H1 (cell line): ENCODE measurements at regions of chr17 and their contacts with region 1.

Region 1: GRCh38 chr17:64129764-64130558 is at the start of gene ERN1:
- DNase-seq: peak; percentile 81 to 91
- H3K4me3 ChIP-seq: peak within 1 kb of the TSS; percentile 69 to 79 (median 74)
- H3K27ac ChIP-seq: no peak within 1 kb of the TSS
- H3K4me1 ChIP-seq: no peaks in the 10 kb centered on the region
- H3K27me3 ChIP-seq: peaks cover 0 to 21% (median 11%) of the 10 kb centered on the region in 4 experiments; a peak in 6 of 7 replicates
- CTCF ChIP-seq: 0 out of 4 replicates have a peak, but pooled peaks of 1 of the 3 experiments have one; percentile 11
- EP300 ChIP-seq: no peak
- POLR2A ChIP-seq: peak; percentile 75 to 76
- RAD21 ChIP-seq: peak in 1 of 2 experiments; percentile 5; a peak in 1 of 4 replicates
- total RNA-seq, gene ERN1: 3.9 and 5.7 TPM in 2 replicates

Region 2: DNA sequence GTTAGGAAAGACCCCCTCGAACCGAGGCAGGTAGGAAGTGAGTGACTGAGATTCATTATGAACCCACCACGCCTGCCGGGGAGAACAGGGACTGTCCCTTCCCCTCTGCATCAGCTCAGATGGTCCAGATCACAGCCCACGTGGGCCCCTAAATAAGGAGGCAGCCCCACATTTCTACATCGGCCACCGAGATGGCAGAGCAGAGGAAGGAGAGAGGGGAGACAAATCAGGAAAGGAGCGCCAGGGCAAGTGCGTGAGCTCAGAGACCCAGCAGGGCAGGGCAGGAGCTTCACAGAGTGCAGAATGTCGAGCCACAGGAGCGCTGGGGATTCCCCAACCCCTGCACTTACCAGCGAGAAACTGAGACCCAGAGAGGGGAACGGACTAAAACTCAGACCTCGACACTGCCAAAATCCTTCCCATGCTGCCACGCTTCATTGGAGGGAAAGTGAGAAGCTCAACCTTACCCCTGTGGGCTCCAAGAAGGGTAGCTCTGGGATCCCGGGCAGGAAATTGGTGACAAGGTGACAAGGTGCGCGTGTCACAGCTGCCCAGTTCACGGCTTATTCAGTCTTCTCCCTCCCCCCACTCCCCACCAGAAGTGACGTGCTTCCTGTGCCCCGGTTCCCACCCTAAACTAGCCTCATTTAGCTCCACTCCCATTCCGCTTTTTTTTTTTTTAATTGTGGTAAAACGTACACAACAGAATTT is 109.8 kb before region 1 on chr17 and contains the start of gene ICAM2:
- CTCF ChIA-PET with region 1: interaction called, 202 read pairs
- POLR2A ChIA-PET with region 1: interaction called, 3 read pairs
- DNase-seq: no peak
- H3K4me3 ChIP-seq: peak within 1 kb of the TSS in 3 of 4 experiments; percentile 3 to 17 (median 3); a peak in 2 of 8 replicates
- H3K27ac ChIP-seq: no peak within 1 kb of the TSS
- H3K4me1 ChIP-seq: peaks cover 0 to 5% (median 3%) of the 10 kb centered on the region in 4 experiments; a peak in 5 of 7 replicates
- H3K27me3 ChIP-seq: no peaks in the 10 kb centered on the region
- CTCF ChIP-seq: no peak
- EP300 ChIP-seq: no peak
- POLR2A ChIP-seq: no peak
- RAD21 ChIP-seq: no peak
- total RNA-seq, gene ICAM2: 0.45 TPM in 1 of 2 replicates, not detected in the other

Region 3: GRCh38 chr17:64063766-64064224 is 66.2 kb before region 1 on chr17:
- CTCF ChIA-PET with region 1: interaction called, 238 read pairs
- POLR2A ChIA-PET with region 1: interaction called, 18 read pairs
- DNase-seq: peak; percentile 43 to 82
- H3K4me3 ChIP-seq: peak overlapping the region in 1 of 4 experiments; percentile 35; a peak in 2 of 8 replicates
- H3K27ac ChIP-seq: no peak overlapping the region
- H3K4me1 ChIP-seq: peaks cover 0 to 3% (median 0%) of the 10 kb centered on the region in 4 experiments; a peak in 1 of 7 replicates
- H3K27me3 ChIP-seq: no peaks in the 10 kb centered on the region
- CTCF ChIP-seq: peak; percentile 90 to 93 (median 92)
- EP300 ChIP-seq: no peak
- POLR2A ChIP-seq: 0 out of 3 replicates have a peak, but pooled peaks of 1 of the 2 experiments have one; percentile 30
- RAD21 ChIP-seq: peak; percentile 89 to 90

Region 4: GRCh38 chr17:64081802-64082799 is 47.9 kb before region 1 on chr17:
- CTCF ChIA-PET with region 1: interaction called, 15 read pairs
- POLR2A ChIA-PET with region 1: interaction called, 3 read pairs
- DNase-seq: no peak
- H3K4me3 ChIP-seq: no peak overlapping the region
- H3K27ac ChIP-seq: no peak overlapping the region
- H3K4me1 ChIP-seq: peaks cover 0 to 7% (median 0%) of the 10 kb centered on the region in 4 experiments; a peak in 2 of 7 replicates
- H3K27me3 ChIP-seq: no peaks in the 10 kb centered on the region
- CTCF ChIP-seq: no peak
- EP300 ChIP-seq: no peak
- POLR2A ChIP-seq: no peak
- RAD21 ChIP-seq: no peak

Region 5: DNA sequence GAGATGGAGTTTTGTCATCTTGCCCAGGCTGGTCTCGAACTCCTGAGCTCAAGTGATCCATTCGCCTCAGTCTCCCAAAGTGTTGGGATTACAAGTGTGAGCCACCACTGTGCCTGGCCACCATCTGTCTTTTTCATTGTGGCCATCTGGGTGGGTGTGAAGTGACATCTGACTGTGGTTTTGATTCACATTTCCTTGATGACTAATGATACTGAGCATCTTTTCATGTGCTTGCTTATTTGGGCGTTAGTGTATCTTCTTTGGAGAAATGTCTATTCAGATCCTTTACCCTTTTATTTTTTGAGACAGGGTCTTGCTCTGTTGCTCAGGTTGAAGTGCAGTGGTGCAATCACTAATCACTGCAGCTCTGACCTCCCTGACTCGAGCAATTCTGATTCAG is 53.9 kb after region 1 on chr17:
- CTCF ChIA-PET with region 1: no interaction called
- POLR2A ChIA-PET with region 1: no interaction called
- DNase-seq: no peak
- H3K4me3 ChIP-seq: no peak overlapping the region
- H3K27ac ChIP-seq: no peak overlapping the region
- H3K4me1 ChIP-seq: no peaks in the 10 kb centered on the region; a peak in 1 of 7 replicates
- H3K27me3 ChIP-seq: no peaks in the 10 kb centered on the region
- CTCF ChIP-seq: no peak
- EP300 ChIP-seq: no peak
- POLR2A ChIP-seq: no peak
- RAD21 ChIP-seq: no peak

Region 6: DNA sequence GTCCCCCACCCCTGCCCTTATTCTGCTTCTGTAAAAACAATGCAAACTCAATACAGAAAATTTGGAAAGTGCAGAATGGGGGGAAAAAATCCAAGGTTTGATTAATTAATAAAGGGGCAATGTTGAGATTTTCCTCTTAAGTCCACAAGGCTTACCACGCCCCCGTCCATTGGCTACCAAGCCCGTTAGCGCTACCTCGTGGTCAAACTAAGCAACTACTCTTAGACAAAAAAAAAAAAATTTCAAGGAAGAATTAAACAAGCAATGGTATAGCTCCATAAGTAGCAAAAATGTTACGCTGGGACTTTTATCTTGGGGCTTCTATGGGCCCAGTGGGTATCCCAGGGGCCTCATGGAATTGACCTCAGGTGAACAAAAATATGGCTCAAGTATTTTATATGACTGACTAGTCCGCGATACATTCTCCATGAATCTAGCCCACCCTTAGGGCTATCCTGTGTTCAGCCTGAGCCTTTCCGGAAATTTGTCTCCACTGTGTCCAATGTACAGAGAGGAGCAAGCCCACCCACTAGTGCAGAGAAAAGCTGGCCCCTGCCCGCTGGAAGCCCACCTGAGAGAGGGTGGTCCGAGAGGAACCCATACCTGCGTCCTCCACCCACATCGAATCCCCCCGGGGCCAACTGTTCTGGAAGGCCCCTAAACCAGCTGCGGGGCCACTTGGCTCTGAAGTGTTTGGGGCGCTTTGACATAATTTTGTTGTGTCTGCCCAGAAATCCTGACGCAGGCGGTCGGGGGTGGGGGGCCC is 152.2 kb after region 1 on chr17:
- CTCF ChIA-PET with region 1: interaction called, 13 read pairs
- POLR2A ChIA-PET with region 1: no interaction called
- DNase-seq: peak in 1 of 2 experiments; percentile 62
- H3K4me3 ChIP-seq: no peak overlapping the region
- H3K27ac ChIP-seq: no peak overlapping the region
- H3K4me1 ChIP-seq: no peaks in the 10 kb centered on the region
- H3K27me3 ChIP-seq: no peaks in the 10 kb centered on the region
- CTCF ChIP-seq: peak; percentile 50 to 90 (median 61)
- EP300 ChIP-seq: no peak
- POLR2A ChIP-seq: no peak
- RAD21 ChIP-seq: peak; percentile 91